K562 (cell line): ENCODE measurements at regions of chr15 and their contacts with region 1.

Region 1: DNA sequence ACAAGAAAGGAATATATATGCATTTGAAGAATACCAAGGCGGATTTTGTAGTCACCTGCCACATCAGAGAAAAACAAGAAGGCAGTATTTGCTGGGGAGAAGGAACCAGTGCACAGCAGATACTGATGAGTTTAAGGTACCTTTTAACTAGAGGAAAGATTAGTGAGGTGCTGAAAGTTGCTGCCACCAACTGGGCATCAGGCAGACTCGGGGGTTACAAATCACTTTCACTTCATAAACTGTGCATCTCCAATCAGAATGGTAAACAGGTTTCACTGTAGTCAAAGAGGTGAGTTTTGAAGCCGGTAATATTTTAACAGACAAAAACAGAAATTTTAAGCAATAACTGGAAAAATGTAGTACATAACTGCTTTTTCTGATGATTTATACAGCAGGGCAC is 4.1 kb downstream of the FBN1 start:
- DNase-seq: peak in 1 of 4 experiments; percentile 16
- ATAC-seq: peak; percentile 44; the same call in 1 of the 3 replicates
- H3K4me3 ChIP-seq: no peak overlapping the region
- H3K27ac ChIP-seq: no peak overlapping the region
- H3K4me1 ChIP-seq: no peaks in the 10 kb centered on the region; a peak in 1 of 5 replicates
- H3K27me3 ChIP-seq: no peaks in the 10 kb centered on the region
- CTCF ChIP-seq: peak in 1 of 3 experiments; percentile 54; a peak in 2 of 6 replicates
- EP300 ChIP-seq: no peak
- POLR2A ChIP-seq: no peak
- RAD21 ChIP-seq: peak; percentile 50 to 58

Region 2: DNA sequence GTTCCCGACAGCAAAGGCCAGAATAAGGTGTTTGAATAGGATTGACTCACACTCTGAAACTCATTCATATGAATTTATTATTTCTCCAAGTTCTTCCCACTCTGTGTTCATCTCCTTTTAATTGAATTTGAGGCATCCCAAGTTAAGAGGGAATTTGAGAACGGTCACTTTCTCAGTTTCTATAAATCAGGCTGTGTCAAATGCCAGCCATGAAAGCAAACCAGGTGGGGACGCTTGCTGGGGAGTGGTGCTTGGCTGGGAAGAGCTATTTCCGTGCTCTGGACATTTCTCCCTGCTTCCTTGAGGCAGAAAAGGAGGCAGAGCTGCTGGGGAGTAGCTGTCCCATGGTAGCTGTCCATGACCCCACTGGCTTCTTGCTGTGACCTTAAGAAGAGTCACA is 112.5 kb before region 1 on chr15:
- CTCF ChIA-PET with region 1: no interaction called
- POLR2A ChIA-PET with region 1: no interaction called
- in situ Hi-C with region 1: no loop called
- intact Hi-C with region 1: loop called (anchors 5 kb)
- DNase-seq: no peak
- ATAC-seq: no peak
- H3K4me3 ChIP-seq: no peak overlapping the region
- H3K27ac ChIP-seq: no peak overlapping the region
- H3K4me1 ChIP-seq: no peaks in the 10 kb centered on the region
- H3K27me3 ChIP-seq: peaks cover 0 to 4% of the 10 kb centered on the region in 2 experiments; a peak in 2 of 5 replicates
- CTCF ChIP-seq: no peak
- EP300 ChIP-seq: no peak
- POLR2A ChIP-seq: no peak
- RAD21 ChIP-seq: no peak